Activated T-helper 1 cell treated with anti-CD3 and anti-CD28 coated beads, Interleukin-12 subunit alpha, Interleukin-12 subunit beta, Interleukin-2, Interleukin-4 antibody, amounts not matched to agents 30 ng/mL and 10 ng/mL and 1 ng/mL, durations not matched to agents 14 hours and 24 hours and 36 hours (primary cell): ENCODE measurements at regions of chr15 and their contacts with region 1.

Region 1: DNA sequence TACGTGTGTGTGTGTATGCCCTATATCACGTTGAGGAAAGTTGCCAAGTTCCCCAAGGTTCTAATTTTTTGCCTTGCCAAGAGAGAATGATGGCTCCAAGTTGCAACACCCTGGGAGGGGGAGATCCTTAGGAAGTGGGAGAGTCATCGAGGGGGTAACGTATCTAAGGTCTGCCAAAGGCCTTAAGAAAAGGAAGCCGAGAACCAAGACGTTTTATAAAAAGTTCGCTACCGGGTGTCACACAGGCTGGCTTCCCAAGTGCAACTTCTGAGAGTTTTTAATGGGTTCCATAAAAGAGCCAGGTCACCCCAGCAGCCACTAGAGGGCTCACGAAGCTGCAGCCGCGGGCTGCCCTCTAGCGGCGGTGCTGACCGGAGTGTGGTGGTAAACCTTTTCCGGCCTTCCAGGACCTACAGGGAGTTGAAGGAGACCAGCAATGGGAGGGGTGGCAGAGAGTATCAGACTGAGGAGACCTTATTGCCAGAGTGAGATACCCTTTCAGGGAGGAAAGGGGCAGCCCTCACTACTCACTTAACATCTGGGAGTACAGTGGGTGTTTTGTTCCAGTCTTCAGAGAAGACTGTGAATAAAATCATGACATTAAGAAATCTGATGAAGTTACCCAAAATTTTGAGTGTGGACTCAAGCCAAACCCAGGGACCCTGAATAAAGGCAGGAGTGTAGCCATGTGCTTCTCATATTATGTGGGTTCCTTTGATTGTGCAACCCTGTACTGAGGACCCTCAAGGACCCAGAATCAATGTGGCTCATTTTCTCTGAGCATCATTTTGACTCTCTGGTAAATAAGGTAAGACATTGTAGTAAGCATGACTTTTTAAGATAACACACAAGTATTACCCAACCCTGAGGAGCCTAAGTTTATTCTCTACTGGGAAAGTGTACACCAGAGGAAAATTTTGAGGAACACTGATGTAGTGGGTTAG is 2.5 kb upstream of the RFX7 start:
- DNase-seq: peak; percentile 85
- H3K4me3 Mint-ChIP-seq: peak overlapping the region; percentile 82
- H3K27ac Mint-ChIP-seq: peak overlapping the region; percentile 82
- H3K4me1 Mint-ChIP-seq: peaks cover 36% of the 10 kb centered on the region
- H3K27me3 Mint-ChIP-seq: peaks cover under 1% of the 10 kb centered on the region

Region 2: DNA sequence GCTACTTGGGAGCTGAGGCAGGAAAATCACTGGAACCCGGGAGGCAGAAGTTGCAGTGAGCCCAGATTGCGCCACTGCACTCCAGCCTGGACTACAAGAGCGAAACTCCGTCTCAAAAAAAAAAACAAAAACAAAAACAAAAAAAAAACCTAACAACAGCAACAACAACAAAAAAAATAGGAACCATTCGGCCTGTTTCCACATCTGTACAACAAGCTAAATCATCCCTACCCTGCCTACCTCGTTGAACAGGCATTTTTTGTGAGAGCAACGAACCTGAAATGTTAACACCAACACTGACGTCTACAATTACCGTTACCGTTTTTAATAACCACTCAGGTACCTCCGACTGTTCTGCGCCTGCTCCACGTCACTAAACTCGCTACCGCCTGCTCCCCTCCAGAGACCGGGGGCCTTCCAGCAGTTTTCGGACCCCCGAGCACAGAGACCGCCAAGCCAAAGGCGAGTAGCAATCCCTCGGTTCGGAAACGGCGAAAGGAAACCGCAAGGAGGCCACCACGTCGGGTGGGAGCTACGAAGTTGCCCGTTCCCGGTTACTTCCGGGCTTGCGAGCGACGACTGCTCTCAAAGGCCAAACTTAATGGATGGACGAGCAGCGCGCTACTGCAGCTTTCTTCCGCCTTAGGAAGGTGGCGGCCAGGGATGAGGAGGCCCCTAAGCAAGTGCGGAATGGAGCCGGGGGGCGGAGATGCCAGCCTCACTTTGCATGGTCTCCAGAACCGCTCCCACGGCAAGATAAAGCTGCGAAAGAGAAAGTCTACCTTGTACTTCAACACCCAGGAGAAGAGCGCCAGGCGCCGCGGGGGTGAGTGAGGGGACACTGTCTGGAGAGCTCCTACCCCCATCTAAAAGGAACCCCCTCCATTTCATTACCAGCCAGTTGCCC is 927.3 kb before region 1 on chr15 and contains the starts of genes PIGB and PIGBOS1:
- intact Hi-C with region 1: loop called (anchors 10 kb)
- DNase-seq: peak; percentile 78
- H3K4me3 Mint-ChIP-seq: peak within 1 kb of the TSS; percentile 100
- H3K27ac Mint-ChIP-seq: peak within 1 kb of the TSS; percentile 99
- H3K4me1 Mint-ChIP-seq: peaks cover 63% of the 10 kb centered on the region
- H3K27me3 Mint-ChIP-seq: no peaks in the 10 kb centered on the region
- total RNA-seq, gene PIGB: 14.0 and 19.9 TPM in 2 replicates
- total RNA-seq, gene PIGBOS1: 10.3 and 11.8 TPM in 2 replicates

Region 3: GRCh38 chr15:55917881-55918296 is 328.3 kb before region 1 on chr15:
- intact Hi-C with region 1: loop called (anchors 10 kb)
- DNase-seq: no peak
- H3K4me3 Mint-ChIP-seq: no peak overlapping the region
- H3K27ac Mint-ChIP-seq: no peak overlapping the region
- H3K4me1 Mint-ChIP-seq: peaks cover 6% of the 10 kb centered on the region
- H3K27me3 Mint-ChIP-seq: no peaks in the 10 kb centered on the region

Region 4: GRCh38 chr15:56207092-56207491 is 39.1 kb before region 1 on chr15:
- intact Hi-C with region 1: loop called (anchors 2 kb)
- DNase-seq: no peak
- H3K4me3 Mint-ChIP-seq: no peak overlapping the region
- H3K27ac Mint-ChIP-seq: peak overlapping the region; percentile 22
- H3K4me1 Mint-ChIP-seq: peaks cover 67% of the 10 kb centered on the region
- H3K27me3 Mint-ChIP-seq: no peaks in the 10 kb centered on the region

Region 5: DNA sequence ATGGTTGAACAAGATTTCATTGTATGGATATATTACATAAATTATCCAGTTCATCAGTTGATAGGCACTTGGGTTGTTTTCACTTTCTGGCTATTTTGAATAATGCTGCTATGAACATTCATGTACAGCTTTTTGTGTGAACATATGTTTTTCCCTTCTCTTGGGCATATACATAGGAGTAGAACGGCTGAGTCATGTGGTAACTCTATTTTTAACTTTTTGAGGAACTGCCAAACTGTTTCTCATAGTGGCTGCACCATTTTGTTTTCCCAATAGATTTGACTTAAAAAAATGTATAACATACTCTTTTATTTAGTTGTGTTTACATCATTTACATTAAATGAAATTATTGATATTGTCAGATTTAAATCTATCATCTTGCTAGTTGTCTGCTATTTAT is 26.3 kb after region 1 on chr15:
- intact Hi-C with region 1: no loop called
- DNase-seq: no peak
- H3K4me3 Mint-ChIP-seq: no peak overlapping the region
- H3K27ac Mint-ChIP-seq: no peak overlapping the region
- H3K4me1 Mint-ChIP-seq: no peaks in the 10 kb centered on the region
- H3K27me3 Mint-ChIP-seq: no peaks in the 10 kb centered on the region

Region 6: GRCh38 chr15:56285981-56286612 is 40.0 kb after region 1 on chr15:
- intact Hi-C with region 1: no loop called
- DNase-seq: no peak
- H3K4me3 Mint-ChIP-seq: no peak overlapping the region
- H3K27ac Mint-ChIP-seq: no peak overlapping the region
- H3K4me1 Mint-ChIP-seq: no peaks in the 10 kb centered on the region
- H3K27me3 Mint-ChIP-seq: no peaks in the 10 kb centered on the region

Region 7: GRCh38 chr15:56390739-56391267 is 144.7 kb after region 1 on chr15:
- intact Hi-C with region 1: no loop called
- DNase-seq: no peak
- H3K4me3 Mint-ChIP-seq: no peak overlapping the region
- H3K27ac Mint-ChIP-seq: no peak overlapping the region
- H3K4me1 Mint-ChIP-seq: no peaks in the 10 kb centered on the region
- H3K27me3 Mint-ChIP-seq: no peaks in the 10 kb centered on the region

Region 8: GRCh38 chr15:56464893-56465520 is 218.9 kb after region 1 on chr15 and contains the start of gene MNS1:
- intact Hi-C with region 1: loop called (anchors 2 kb)
- DNase-seq: peak; percentile 70
- H3K4me3 Mint-ChIP-seq: peak within 1 kb of the TSS; percentile 93
- H3K27ac Mint-ChIP-seq: peak within 1 kb of the TSS; percentile 74
- H3K4me1 Mint-ChIP-seq: peaks cover 28% of the 10 kb centered on the region
- H3K27me3 Mint-ChIP-seq: peaks cover 32% of the 10 kb centered on the region
- total RNA-seq, gene MNS1: 0.17 and 0.44 TPM in 2 replicates

Region 9: DNA sequence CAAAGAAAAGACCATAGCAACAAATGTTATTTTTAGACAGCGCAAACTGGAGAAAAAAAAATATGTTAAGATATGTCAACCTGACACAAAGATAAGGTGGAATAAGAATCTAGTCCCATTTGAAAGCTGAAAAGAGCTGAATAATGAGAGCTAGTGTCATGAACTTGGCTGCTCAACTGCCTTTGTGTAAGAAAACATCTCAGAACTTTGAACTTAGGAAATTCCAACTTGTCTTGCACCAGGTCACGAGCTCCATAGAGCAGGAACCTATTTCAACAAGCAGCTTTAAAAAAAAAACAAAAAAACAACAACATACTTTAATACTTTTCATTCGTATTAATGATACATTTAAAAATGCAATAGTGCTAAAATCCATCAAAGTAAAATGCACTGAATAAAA is 407.6 kb after region 1 on chr15:
- intact Hi-C with region 1: no loop called
- DNase-seq: no peak
- H3K4me3 Mint-ChIP-seq: no peak overlapping the region
- H3K27ac Mint-ChIP-seq: no peak overlapping the region
- H3K4me1 Mint-ChIP-seq: peaks cover 5% of the 10 kb centered on the region
- H3K27me3 Mint-ChIP-seq: no peaks in the 10 kb centered on the region

Region 10: GRCh38 chr15:56918046-56918938 is 672.1 kb after region 1 on chr15 and contains the start of gene TCF12:
- intact Hi-C with region 1: loop called (anchors 10 kb)
- DNase-seq: peak; percentile 87
- H3K4me3 Mint-ChIP-seq: peak within 1 kb of the TSS; percentile 82
- H3K27ac Mint-ChIP-seq: peak within 1 kb of the TSS; percentile 63
- H3K4me1 Mint-ChIP-seq: peaks cover 39% of the 10 kb centered on the region
- H3K27me3 Mint-ChIP-seq: no peaks in the 10 kb centered on the region
- total RNA-seq, gene TCF12: 85.7 and 89.2 TPM in 2 replicates